HAP-1 (cell line): ENCODE measurements at regions of chr5 and their contacts with region 1.

Region 1: GRCh38 chr5:58460732-58461286 is 923 bp upstream of the PLK2 start:
- DNase-seq: peak; percentile 72 to 93
- H3K4me3 ChIP-seq: peak overlapping the region; percentile 64
- H3K4me1 ChIP-seq: peaks cover 19% of the 10 kb centered on the region
- H3K27me3 ChIP-seq: no peaks in the 10 kb centered on the region

Region 2: GRCh38 chr5:57298295-57298984 is 1162.4 kb before region 1 on chr5:
- in situ Hi-C with region 1: loop called (anchors 10 kb)
- DNase-seq: peak; percentile 67 to 92
- H3K4me3 ChIP-seq: no peak overlapping the region
- H3K4me1 ChIP-seq: peaks cover 2% of the 10 kb centered on the region
- H3K27me3 ChIP-seq: no peaks in the 10 kb centered on the region

Region 3: GRCh38 chr5:57499262-57500050 is 961.4 kb before region 1 on chr5:
- in situ Hi-C with region 1: loop called (anchors 10 kb)
- DNase-seq: peak; percentile 16 to 22
- H3K4me3 ChIP-seq: no peak overlapping the region
- H3K4me1 ChIP-seq: no peaks in the 10 kb centered on the region; the same call in 1 of the 2 replicates
- H3K27me3 ChIP-seq: no peaks in the 10 kb centered on the region

Region 4: DNA sequence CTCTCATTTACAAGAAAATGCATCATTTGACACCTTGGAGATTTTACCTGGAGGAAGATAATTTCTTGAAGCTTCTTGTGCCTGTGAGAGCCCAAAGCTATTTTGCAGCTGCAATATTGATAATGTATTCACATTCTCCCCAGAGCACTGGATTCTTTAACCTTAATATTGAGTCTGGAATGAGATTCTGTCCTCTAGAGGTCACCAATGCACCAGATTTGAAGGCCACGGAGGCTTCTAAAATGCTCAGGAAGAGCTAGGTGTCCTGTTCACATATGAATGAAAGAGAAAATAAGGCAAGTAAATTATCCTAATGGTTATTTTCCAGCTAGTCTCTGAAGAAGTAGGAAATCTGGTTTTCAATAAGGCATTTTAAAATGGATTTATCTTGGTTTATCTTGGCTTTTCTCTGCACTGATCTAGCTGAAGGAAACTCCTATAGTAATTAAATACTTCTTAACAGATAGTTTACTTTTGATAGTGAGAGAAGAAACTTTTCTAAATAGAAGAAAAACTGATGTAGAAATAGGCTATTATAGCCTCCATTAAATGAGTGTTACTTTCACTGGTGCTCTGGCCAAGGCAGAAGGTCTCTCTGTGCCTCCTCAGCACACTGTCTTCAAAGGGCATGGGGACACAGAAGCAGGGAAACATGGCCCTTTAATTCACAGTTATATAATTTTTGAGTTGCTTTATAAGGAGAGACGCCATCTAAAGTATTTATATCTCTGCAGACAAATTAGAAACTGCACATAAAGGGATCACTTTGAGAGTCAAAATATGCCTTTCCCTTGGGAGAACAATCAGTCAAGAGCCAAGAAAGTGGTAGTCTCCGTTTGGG is 681.2 kb before region 1 on chr5:
- in situ Hi-C with region 1: loop called (anchors 25 kb)
- DNase-seq: peak; percentile 27 to 42
- H3K4me3 ChIP-seq: no peak overlapping the region
- H3K4me1 ChIP-seq: no peaks in the 10 kb centered on the region
- H3K27me3 ChIP-seq: no peaks in the 10 kb centered on the region

Region 5: GRCh38 chr5:57887851-57888621 is 572.8 kb before region 1 on chr5:
- in situ Hi-C with region 1: no loop called
- DNase-seq: no peak
- H3K4me3 ChIP-seq: no peak overlapping the region
- H3K4me1 ChIP-seq: no peaks in the 10 kb centered on the region
- H3K27me3 ChIP-seq: no peaks in the 10 kb centered on the region